CD4-positive, alpha-beta memory T cell (primary cell): ENCODE measurements at regions of chr7 and their contacts with region 1.

Region 1: GRCh38 chr7:120805636-120806388 is 52.1 kb downstream of the TSPAN12 start:
- DNase-seq: peak; percentile 39 to 46 (median 43)
- H3K4me3 ChIP-seq: no peak overlapping the region
- H3K4me3 Mint-ChIP-seq: no peak overlapping the region
- H3K27ac ChIP-seq: no peak overlapping the region
- H3K27ac Mint-ChIP-seq: no peak overlapping the region
- H3K4me1 ChIP-seq: no peaks in the 10 kb centered on the region
- H3K4me1 Mint-ChIP-seq: no peaks in the 10 kb centered on the region
- H3K27me3 ChIP-seq: no peaks in the 10 kb centered on the region
- H3K27me3 Mint-ChIP-seq: peaks cover 5 to 8% of the 10 kb centered on the region in 2 donors

Region 2: GRCh38 chr7:120792091-120792860 is 13.5 kb before region 1 on chr7:
- CTCF ChIA-PET with region 1: interaction called, 26 read pairs
- POLR2A ChIA-PET with region 1: no interaction called
- intact Hi-C with region 1: no loop called
- DNase-seq: peak; percentile 22 to 43 (median 32)
- H3K4me3 ChIP-seq: no peak overlapping the region
- H3K4me3 Mint-ChIP-seq: no peak overlapping the region
- H3K27ac ChIP-seq: no peak overlapping the region
- H3K27ac Mint-ChIP-seq: no peak overlapping the region
- H3K4me1 ChIP-seq: no peaks in the 10 kb centered on the region
- H3K4me1 Mint-ChIP-seq: no peaks in the 10 kb centered on the region
- H3K27me3 ChIP-seq: no peaks in the 10 kb centered on the region
- H3K27me3 Mint-ChIP-seq: no peaks in the 10 kb centered on the region

Region 3: GRCh38 chr7:120817851-120818250 is 12.0 kb after region 1 on chr7:
- CTCF ChIA-PET with region 1: interaction called, 12 read pairs
- POLR2A ChIA-PET with region 1: no interaction called
- intact Hi-C with region 1: no loop called
- DNase-seq: no peak
- H3K4me3 ChIP-seq: no peak overlapping the region
- H3K4me3 Mint-ChIP-seq: no peak overlapping the region
- H3K27ac ChIP-seq: no peak overlapping the region
- H3K27ac Mint-ChIP-seq: no peak overlapping the region
- H3K4me1 ChIP-seq: no peaks in the 10 kb centered on the region
- H3K4me1 Mint-ChIP-seq: no peaks in the 10 kb centered on the region
- H3K27me3 ChIP-seq: no peaks in the 10 kb centered on the region
- H3K27me3 Mint-ChIP-seq: peaks cover 11 to 23% of the 10 kb centered on the region in 2 donors

Region 4: DNA sequence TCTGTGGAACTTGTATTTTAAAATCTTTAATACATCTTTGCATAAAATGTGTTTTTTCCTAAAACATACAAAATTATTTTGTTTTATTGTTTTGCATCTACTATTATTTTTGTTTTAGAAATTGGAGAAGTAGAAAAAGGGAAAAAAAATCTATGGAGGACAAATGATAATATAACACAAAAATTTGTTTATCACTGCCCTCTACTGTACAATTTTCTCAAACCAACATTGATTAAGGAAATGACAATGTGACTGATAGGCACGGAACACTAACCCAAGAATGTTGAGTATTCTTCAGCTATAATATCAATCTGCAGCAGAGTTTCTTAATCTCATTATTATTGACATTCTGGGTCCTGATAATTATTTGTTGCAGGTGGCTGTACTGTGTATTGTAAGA is 135.3 kb after region 1 on chr7:
- CTCF ChIA-PET with region 1: interaction called, 4 read pairs
- POLR2A ChIA-PET with region 1: no interaction called
- intact Hi-C with region 1: loop called (anchors 1 kb)
- DNase-seq: peak in 1 of 5 donors; percentile 10
- H3K4me3 ChIP-seq: no peak overlapping the region
- H3K4me3 Mint-ChIP-seq: no peak overlapping the region
- H3K27ac ChIP-seq: no peak overlapping the region
- H3K27ac Mint-ChIP-seq: no peak overlapping the region
- H3K4me1 ChIP-seq: no peaks in the 10 kb centered on the region
- H3K4me1 Mint-ChIP-seq: no peaks in the 10 kb centered on the region
- H3K27me3 ChIP-seq: no peaks in the 10 kb centered on the region
- H3K27me3 Mint-ChIP-seq: peaks cover 0 to 1% of the 10 kb centered on the region in 2 donors

Region 5: GRCh38 chr7:121081327-121081936 is 275.6 kb after region 1 on chr7:
- CTCF ChIA-PET with region 1: interaction called, 7 read pairs
- POLR2A ChIA-PET with region 1: no interaction called
- intact Hi-C with region 1: loop called (anchors 1 kb)
- DNase-seq: peak in 4 of 5 donors; percentile 39 to 51 (median 44)
- H3K4me3 ChIP-seq: no peak overlapping the region
- H3K4me3 Mint-ChIP-seq: no peak overlapping the region
- H3K27ac ChIP-seq: no peak overlapping the region
- H3K27ac Mint-ChIP-seq: no peak overlapping the region
- H3K4me1 ChIP-seq: no peaks in the 10 kb centered on the region
- H3K4me1 Mint-ChIP-seq: no peaks in the 10 kb centered on the region
- H3K27me3 ChIP-seq: no peaks in the 10 kb centered on the region
- H3K27me3 Mint-ChIP-seq: peaks cover 12 to 14% of the 10 kb centered on the region in 2 donors

Region 6: DNA sequence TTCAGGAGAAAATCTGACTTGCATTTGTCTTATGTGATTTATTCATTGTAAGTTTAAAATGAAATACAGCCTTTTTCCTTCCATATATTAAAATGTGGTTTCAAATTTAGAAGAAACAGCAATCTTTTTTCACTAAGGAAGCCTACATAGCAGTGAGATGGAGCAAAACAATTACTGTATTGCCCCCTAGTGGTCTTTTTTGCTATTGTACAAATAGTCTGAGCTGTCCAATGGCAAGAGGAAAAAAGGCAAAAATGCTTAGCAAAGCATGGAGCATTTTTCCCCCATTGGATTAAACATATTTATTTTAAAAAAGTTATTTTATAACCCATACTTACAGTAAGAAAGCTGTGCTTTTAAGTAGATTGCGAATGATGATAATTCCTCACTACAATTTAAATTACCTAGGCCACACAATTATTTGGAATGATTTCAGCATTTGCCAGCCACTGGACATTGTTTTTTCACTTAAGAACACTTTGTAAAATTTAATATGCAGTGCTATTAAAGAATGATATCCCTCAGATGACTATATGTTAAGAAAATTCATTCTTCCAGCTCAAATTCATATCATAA is 302.2 kb after region 1 on chr7:
- CTCF ChIA-PET with region 1: interaction called, 9 read pairs
- POLR2A ChIA-PET with region 1: no interaction called
- intact Hi-C with region 1: loop called (anchors 1 kb)
- DNase-seq: peak in 4 of 5 donors; percentile 47 to 56 (median 54)
- H3K4me3 ChIP-seq: no peak overlapping the region
- H3K4me3 Mint-ChIP-seq: no peak overlapping the region
- H3K27ac ChIP-seq: no peak overlapping the region
- H3K27ac Mint-ChIP-seq: no peak overlapping the region
- H3K4me1 ChIP-seq: no peaks in the 10 kb centered on the region
- H3K4me1 Mint-ChIP-seq: no peaks in the 10 kb centered on the region
- H3K27me3 ChIP-seq: no peaks in the 10 kb centered on the region
- H3K27me3 Mint-ChIP-seq: peaks cover 3 to 10% of the 10 kb centered on the region in 2 donors